ENCODE measurements at regions of chr19 and their contacts with region 1.

Region 1: DNA sequence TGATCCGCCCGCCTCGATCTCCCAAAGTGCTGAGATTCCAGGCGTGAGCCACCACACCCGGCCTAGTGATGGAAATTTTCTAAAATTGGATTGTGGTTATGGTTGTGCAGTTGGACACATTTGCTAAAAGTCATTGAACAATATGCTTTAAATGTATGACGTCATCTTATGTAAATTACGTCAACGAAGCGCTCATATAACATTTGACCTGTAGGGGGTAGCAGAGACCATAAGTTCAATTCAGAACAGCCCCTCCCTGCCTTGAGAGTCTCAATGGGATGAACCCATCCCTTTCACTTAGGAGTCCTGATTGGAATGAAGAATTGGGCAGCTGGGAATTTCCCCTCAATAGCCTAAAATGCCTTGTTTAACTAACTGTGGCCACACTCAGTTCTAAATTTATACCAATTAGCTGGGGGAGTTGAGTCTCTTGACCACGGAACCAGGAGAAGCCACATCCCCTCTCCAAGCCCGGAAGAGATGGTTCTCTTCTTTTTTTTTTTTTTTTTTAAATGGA is 15.3 kb upstream of the TLE6 start:
- DNase-seq: peak in 8 of 9 experiments; percentile 19 to 91 (median 54)
- ATAC-seq: peak; percentile 98
- H3K4me3 ChIP-seq: no peak overlapping the region
- H3K4me3 Mint-ChIP-seq: no peak overlapping the region
- H3K27ac ChIP-seq: no peak overlapping the region
- H3K27ac Mint-ChIP-seq: no peak overlapping the region
- H3K4me1 ChIP-seq: no peaks in the 10 kb centered on the region
- H3K4me1 Mint-ChIP-seq: peaks cover 4% of the 10 kb centered on the region
- H3K27me3 ChIP-seq: no peaks in the 10 kb centered on the region
- H3K27me3 Mint-ChIP-seq: no peaks in the 10 kb centered on the region
- CTCF ChIP-seq: peak; percentile 78

Region 2: GRCh38 chr19:3075895-3076431 is 113.9 kb after region 1 on chr19:
- CTCF ChIA-PET with region 1: interaction called, 16 read pairs
- POLR2A ChIA-PET with region 1: interaction called, 3 read pairs
- intact Hi-C with region 1: loop called (anchors 1 kb)
- DNase-seq: peak; percentile 58 to 89 (median 79)
- ATAC-seq: peak; percentile 100
- H3K4me3 ChIP-seq: no peak overlapping the region
- H3K4me3 Mint-ChIP-seq: no peak overlapping the region
- H3K27ac ChIP-seq: no peak overlapping the region
- H3K27ac Mint-ChIP-seq: no peak overlapping the region
- H3K4me1 ChIP-seq: peaks cover 10% of the 10 kb centered on the region
- H3K4me1 Mint-ChIP-seq: peaks cover 2% of the 10 kb centered on the region
- H3K27me3 ChIP-seq: no peaks in the 10 kb centered on the region
- H3K27me3 Mint-ChIP-seq: no peaks in the 10 kb centered on the region
- CTCF ChIP-seq: peak; percentile 85

Region 3: GRCh38 chr19:3125900-3126524 is 163.9 kb after region 1 on chr19:
- CTCF ChIA-PET with region 1: interaction called, 16 read pairs
- POLR2A ChIA-PET with region 1: no interaction called
- intact Hi-C with region 1: no loop called
- DNase-seq: peak; percentile 58 to 80 (median 71)
- ATAC-seq: peak; percentile 97
- H3K4me3 ChIP-seq: no peak overlapping the region
- H3K4me3 Mint-ChIP-seq: no peak overlapping the region
- H3K27ac ChIP-seq: no peak overlapping the region
- H3K27ac Mint-ChIP-seq: no peak overlapping the region
- H3K4me1 ChIP-seq: no peaks in the 10 kb centered on the region
- H3K4me1 Mint-ChIP-seq: peaks cover 2% of the 10 kb centered on the region
- H3K27me3 ChIP-seq: peaks cover 0 to 3% of the 10 kb centered on the region in 2 experiments
- H3K27me3 Mint-ChIP-seq: peaks cover 2% of the 10 kb centered on the region
- CTCF ChIP-seq: peak; percentile 66

Region 4: DNA sequence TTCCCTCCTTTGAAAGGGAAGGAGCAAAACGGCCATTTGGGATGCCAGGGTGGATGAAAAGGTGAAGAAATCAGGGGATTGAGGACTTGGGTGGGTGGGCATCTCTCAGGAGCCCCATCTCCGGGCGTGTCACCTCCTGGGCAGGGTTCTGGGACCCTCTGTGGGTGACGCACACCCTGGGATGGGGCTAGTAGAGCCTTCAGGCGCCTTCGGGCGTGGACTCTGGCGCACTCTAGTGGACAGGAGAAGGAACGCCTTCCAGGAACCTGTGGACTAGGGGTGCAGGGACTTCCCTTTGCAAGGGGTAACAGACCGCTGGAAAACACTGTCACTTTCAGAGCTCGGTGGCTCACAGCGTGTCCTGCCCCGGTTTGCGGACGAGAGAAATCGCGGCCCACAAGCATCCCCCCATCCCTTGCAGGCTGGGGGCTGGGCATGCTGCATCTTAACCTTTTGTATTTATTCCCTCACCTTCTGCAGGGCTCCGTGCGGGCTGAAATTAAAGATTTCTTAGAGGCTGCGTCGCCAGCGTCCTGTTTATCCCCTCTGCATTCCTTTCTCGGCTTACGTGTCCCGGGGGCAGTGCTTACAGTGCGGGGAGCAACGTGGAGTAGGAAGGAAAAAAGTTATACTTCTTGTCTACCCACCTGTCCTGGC is 201.3 kb after region 1 on chr19:
- CTCF ChIA-PET with region 1: interaction called, 11 read pairs
- POLR2A ChIA-PET with region 1: no interaction called
- intact Hi-C with region 1: loop called (anchors 1 to 2 kb)
- DNase-seq: peak; percentile 46 to 85 (median 75)
- ATAC-seq: peak; percentile 97
- H3K4me3 ChIP-seq: no peak overlapping the region
- H3K4me3 Mint-ChIP-seq: no peak overlapping the region
- H3K27ac ChIP-seq: no peak overlapping the region
- H3K27ac Mint-ChIP-seq: peak overlapping the region; percentile 14
- H3K4me1 ChIP-seq: no peaks in the 10 kb centered on the region
- H3K4me1 Mint-ChIP-seq: peaks cover 14% of the 10 kb centered on the region
- H3K27me3 ChIP-seq: no peaks in the 10 kb centered on the region
- H3K27me3 Mint-ChIP-seq: no peaks in the 10 kb centered on the region
- CTCF ChIP-seq: peak; percentile 89

Region 5: DNA sequence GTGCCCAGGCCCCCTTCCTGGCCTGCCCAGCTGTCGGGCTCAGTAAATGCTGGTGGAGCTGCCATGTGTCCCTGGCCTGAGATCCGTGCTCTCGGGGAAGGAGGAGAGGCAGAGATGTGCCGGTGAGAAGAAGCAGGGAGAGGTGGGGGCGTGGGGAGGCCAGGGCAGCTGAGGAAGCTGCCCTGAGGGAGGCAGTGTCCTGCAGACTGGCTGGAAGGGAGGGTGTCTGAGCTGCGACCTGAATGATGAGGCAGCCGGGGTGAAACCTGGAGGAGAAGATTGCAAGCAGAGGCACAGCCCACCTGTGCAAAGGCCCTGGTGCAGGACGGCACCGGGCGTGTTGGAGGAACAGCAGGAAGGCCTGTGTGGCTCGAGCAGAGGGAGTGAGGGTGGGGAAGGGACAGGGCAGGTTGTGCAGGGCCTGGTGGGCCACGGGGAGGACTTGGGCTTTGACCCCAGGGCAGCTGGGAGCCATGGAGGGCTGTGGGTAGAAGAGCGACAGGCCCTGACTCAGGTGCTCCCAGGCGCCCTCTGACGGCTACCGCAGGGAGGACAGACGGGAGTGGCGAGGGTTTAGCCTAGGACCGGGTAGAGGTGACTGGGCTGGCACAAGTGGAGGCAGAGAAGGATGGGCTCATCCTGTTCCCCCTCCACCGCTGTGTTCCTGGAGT is 248.4 kb after region 1 on chr19:
- CTCF ChIA-PET with region 1: interaction called, 5 read pairs
- POLR2A ChIA-PET with region 1: no interaction called
- intact Hi-C with region 1: loop called in 1 of 2 experiments (anchors 1 kb)
- DNase-seq: peak; percentile 54 to 80 (median 68)
- ATAC-seq: peak; percentile 97
- H3K4me3 ChIP-seq: no peak overlapping the region
- H3K4me3 Mint-ChIP-seq: no peak overlapping the region
- H3K27ac ChIP-seq: no peak overlapping the region
- H3K27ac Mint-ChIP-seq: no peak overlapping the region
- H3K4me1 ChIP-seq: no peaks in the 10 kb centered on the region
- H3K4me1 Mint-ChIP-seq: no peaks in the 10 kb centered on the region
- H3K27me3 ChIP-seq: no peaks in the 10 kb centered on the region
- H3K27me3 Mint-ChIP-seq: no peaks in the 10 kb centered on the region
- CTCF ChIP-seq: peak; percentile 59

Measured in CD8-positive, alpha-beta T cell (primary cell).